ENCODE measurements at regions of chr10 and their contacts with region 1.

Region 1: DNA sequence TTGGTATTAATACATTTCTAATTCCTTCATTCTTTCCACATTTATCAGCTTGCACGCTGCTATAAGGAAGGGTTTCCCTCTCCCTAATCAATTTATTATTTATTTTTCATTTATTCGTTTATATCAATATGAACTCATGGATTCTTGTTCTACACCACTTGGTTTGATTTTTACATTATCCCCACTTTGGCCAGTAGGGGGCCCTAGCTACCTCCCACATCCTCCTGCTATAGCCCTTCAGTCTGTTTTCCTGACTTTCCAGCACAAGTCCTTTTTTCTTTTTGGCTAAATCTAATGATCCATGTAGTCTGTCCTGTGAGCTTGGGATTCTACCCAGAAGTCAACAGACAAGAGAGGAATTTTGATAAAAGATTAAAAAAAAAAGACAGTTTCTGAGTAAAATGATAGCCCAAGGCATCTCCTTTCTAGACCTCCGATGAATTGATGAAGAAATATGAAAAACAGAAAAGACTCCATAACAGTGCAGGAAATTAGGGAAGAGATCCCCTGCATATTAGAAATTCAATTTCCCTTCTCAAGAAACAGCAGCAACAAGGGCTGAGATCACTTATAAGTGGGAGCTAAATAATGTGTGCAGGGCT is 47.7 kb downstream of the LYZL2 start:
- DNase-seq: peak; percentile 30
- H3K4me3 ChIP-seq: no peak overlapping the region
- H3K27ac ChIP-seq: no peak overlapping the region
- H3K27me3 ChIP-seq: no peaks in the 10 kb centered on the region
- CTCF ChIP-seq: peak; percentile 88

Region 2: GRCh38 chr10:30413996-30414576 is 167.8 kb before region 1 on chr10:
- CTCF ChIA-PET with region 1: interaction called, 11 read pairs
- POLR2A ChIA-PET with region 1: no interaction called
- DNase-seq: no peak
- H3K4me3 ChIP-seq: no peak overlapping the region
- H3K27ac ChIP-seq: no peak overlapping the region
- H3K27me3 ChIP-seq: peaks cover 3% of the 10 kb centered on the region
- CTCF ChIP-seq: peak; percentile 86

Region 3: GRCh38 chr10:30562787-30563186 is 19.1 kb before region 1 on chr10:
- CTCF ChIA-PET with region 1: interaction called, 20 read pairs
- POLR2A ChIA-PET with region 1: no interaction called
- DNase-seq: no peak
- H3K4me3 ChIP-seq: no peak overlapping the region
- H3K27ac ChIP-seq: no peak overlapping the region
- H3K27me3 ChIP-seq: peaks cover 18% of the 10 kb centered on the region
- CTCF ChIP-seq: no peak

Measured in AG04450 (cell line).